Dorsolateral prefrontal cortex (tissue), 120 donors: ENCODE measurements at regions of chr9 and their contacts with region 1.

Region 1: GRCh38 chr9:129428864-129429590 is 191.9 kb downstream of the C9orf50 start:
- DNase-seq: no peak
- H3K4me3 ChIP-seq: no peak overlapping the region
- H3K27ac ChIP-seq: peak overlapping the region in 1 of 59 donors; percentile 18
- H3K27me3 ChIP-seq: no peaks in the 10 kb centered on the region
- CTCF ChIP-seq: no peak

Region 2: DNA sequence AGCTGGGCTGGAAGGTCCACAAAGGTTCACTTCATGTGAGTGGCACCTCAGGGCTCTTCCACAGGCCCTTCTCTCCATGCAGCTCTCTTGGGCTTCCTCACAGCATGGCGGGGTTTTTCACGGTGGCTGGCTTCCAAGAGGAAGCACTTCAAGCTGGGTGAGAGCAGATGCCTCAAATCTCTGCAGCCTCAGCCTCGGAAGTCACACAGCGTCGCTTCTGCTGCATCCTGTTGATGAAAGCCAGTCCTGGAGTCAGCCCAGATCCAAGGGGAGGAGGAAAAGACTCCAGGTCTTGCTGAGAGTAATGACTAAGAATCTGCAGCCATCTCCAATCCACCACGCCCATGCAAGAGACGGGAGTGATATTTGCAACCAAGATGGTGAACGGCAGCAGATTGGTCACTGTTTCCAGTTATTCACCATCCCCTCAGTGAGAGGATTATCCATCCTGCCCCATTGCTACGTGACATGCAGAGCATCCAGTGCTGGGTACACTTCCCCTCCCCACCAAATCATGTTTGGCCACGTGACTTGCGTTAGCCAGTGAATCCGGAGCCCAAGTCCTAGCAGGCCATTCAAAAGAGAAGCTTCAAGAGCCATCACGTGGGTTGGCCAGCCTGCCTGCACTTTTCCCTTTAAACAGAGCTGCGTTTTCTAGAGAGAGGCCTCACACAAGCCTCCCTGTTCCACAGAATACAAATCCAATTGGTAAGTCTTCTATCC is 18.0 kb after region 1 on chr9:
- intact Hi-C with region 1: loop called in 1 of 2 experiments (anchors 1 kb)
- DNase-seq: peak; percentile 57 to 90 (median 76)
- H3K4me3 ChIP-seq: no peak overlapping the region
- H3K27ac ChIP-seq: peak overlapping the region in 53 of 59 donors; percentile 9 to 84 (median 66)
- H3K27me3 ChIP-seq: no peaks in the 10 kb centered on the region
- CTCF ChIP-seq: peak in 1 of 56 donors; percentile 21

Region 3: GRCh38 chr9:129696938-129697650 is 268.1 kb after region 1 on chr9:
- intact Hi-C with region 1: no loop called
- DNase-seq: no peak
- H3K4me3 ChIP-seq: peak overlapping the region in 56 of 59 donors; percentile 18 to 67 (median 48)
- H3K27ac ChIP-seq: peak overlapping the region in 2 of 59 donors; percentile 44 to 57
- H3K27me3 ChIP-seq: peaks cover 0 to 20% (median 0%) of the 10 kb centered on the region in 45 donors
- CTCF ChIP-seq: no peak